ENCODE measurements at regions of chr1 and their contacts with region 1.

Region 1: DNA sequence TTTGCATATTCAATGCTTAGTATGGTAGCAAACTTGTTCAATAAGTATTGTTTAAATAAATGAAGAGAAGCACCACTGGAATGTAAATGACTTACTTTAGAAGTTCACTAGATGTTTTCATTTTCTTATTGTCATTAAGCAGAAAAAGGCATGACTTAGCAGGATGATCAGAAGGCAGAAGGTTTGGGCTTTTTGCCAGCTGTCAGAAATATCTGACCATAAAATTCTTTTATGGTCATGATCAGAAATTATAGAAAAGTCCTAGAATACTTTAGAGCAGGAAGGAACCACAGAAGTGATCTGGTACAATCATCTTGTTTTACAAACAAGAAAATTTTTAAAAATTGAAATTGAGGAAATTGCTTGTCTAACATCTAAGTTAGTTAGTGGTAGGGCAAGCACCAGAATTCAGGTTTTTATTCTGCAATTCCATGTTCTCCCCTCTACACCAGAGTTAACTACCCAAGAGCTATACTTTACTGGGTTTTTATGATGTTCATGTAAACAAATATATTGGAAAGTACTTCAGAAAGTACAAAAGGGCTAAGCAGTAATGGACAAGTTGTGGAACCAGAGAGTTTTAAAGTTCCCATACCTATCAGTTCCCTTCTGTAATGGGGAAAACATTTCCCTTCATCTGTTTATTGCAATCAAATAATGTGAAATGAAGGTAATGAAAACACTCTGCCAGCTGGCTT is 10.1 kb downstream of the FMO5 start:
- DNase-seq: no peak
- ATAC-seq: peak; percentile 48
- H3K4me3 ChIP-seq: no peak overlapping the region
- H3K27ac ChIP-seq: peak overlapping the region; percentile 75
- H3K4me1 ChIP-seq: peaks cover 100% of the 10 kb centered on the region
- H3K27me3 ChIP-seq: no peaks in the 10 kb centered on the region
- CTCF ChIP-seq: no peak
- EP300 ChIP-seq: no peak
- POLR2A ChIP-seq: no peak
- RAD21 ChIP-seq: no peak

Region 2: DNA sequence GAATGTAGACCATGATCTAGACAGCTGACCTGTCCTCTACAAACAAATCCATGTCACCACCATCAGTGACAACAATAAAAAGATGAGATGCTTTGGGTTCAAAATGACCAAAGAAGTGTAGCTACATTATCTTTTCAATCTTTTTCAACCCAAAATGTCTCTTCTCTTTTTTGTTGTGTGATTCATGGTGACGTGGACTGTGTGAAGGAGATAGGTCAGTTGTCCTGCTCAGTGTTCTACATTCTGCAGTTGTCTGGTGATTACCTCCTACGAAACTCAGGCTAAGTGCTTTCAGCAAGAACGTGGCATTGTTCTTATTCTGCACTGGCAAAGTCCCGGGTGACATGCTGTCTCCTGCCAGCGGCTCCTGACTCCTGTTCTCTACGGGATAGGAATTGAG is 115.8 kb before region 1 on chr1:
- CTCF ChIA-PET with region 1: no interaction called
- POLR2A ChIA-PET with region 1: no interaction called
- in situ Hi-C with region 1: no loop called
- intact Hi-C with region 1: no loop called
- DNase-seq: no peak
- ATAC-seq: no peak
- H3K4me3 ChIP-seq: no peak overlapping the region
- H3K27ac ChIP-seq: no peak overlapping the region
- H3K4me1 ChIP-seq: no peaks in the 10 kb centered on the region
- H3K27me3 ChIP-seq: peaks cover 0 to 14% of the 10 kb centered on the region in 2 experiments; a peak in 3 of 5 replicates
- CTCF ChIP-seq: no peak
- EP300 ChIP-seq: no peak
- POLR2A ChIP-seq: no peak
- RAD21 ChIP-seq: no peak

Region 3: GRCh38 chr1:147172168-147172992 is 42.6 kb before region 1 on chr1 and contains the start of gene PRKAB2:
- CTCF ChIA-PET with region 1: interaction called, 3 read pairs
- POLR2A ChIA-PET with region 1: interaction called, 10 read pairs
- in situ Hi-C with region 1: no loop called
- intact Hi-C with region 1: loop called (anchors 2 kb)
- DNase-seq: peak; percentile 91
- ATAC-seq: peak; percentile 93
- H3K4me3 ChIP-seq: peak within 1 kb of the TSS; percentile 85 to 99 (median 99)
- H3K27ac ChIP-seq: peak within 1 kb of the TSS; percentile 89
- H3K4me1 ChIP-seq: peaks cover 40% of the 10 kb centered on the region
- H3K27me3 ChIP-seq: peaks cover 0 to 4% of the 10 kb centered on the region in 2 experiments; a peak in 1 of 5 replicates
- CTCF ChIP-seq: peak; percentile 92
- EP300 ChIP-seq: peak in 1 of 2 experiments; percentile 35; a peak in 1 of 4 replicates
- POLR2A ChIP-seq: peak in 1 of 2 experiments; percentile 59; a peak in 3 of 4 replicates
- RAD21 ChIP-seq: peak; percentile 99
- total RNA-seq, gene PRKAB2: 43.3 and 44.0 TPM in 2 replicates

Region 4: GRCh38 chr1:147189514-147189913 is 25.5 kb before region 1 on chr1:
- CTCF ChIA-PET with region 1: no interaction called
- POLR2A ChIA-PET with region 1: no interaction called
- in situ Hi-C with region 1: no loop called
- intact Hi-C with region 1: no loop called
- DNase-seq: no peak
- ATAC-seq: peak; percentile 44; the same call in 1 of the 3 replicates
- H3K4me3 ChIP-seq: no peak overlapping the region
- H3K27ac ChIP-seq: no peak overlapping the region
- H3K4me1 ChIP-seq: no peaks in the 10 kb centered on the region
- H3K27me3 ChIP-seq: no peaks in the 10 kb centered on the region
- CTCF ChIP-seq: no peak
- EP300 ChIP-seq: no peak
- POLR2A ChIP-seq: peak in 1 of 2 experiments; percentile 29; a peak in 1 of 4 replicates
- RAD21 ChIP-seq: no peak

Region 5: DNA sequence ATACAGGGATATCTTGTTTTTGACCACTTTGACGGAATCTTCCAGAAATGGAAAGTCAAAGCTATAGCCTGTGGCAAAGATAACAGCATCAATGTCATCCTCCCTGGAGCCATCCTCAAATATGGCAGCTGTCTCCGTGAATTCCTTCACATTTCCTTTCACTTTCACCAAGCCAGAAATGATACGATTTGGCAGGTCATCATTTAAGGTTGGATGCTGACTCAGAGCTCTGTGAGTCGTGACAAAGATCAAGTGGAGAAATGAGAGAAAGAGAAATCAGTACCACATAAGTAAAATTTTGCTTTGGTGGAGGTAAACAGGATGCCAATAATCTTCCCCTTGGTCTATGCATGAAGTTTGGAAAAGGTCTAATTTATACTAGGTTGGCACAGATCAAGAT is 13.7 kb before region 1 on chr1:
- CTCF ChIA-PET with region 1: no interaction called
- POLR2A ChIA-PET with region 1: interaction called, 16 read pairs
- in situ Hi-C with region 1: no loop called
- intact Hi-C with region 1: no loop called
- DNase-seq: no peak
- ATAC-seq: peak; percentile 13; the same call in 1 of the 3 replicates
- H3K4me3 ChIP-seq: no peak overlapping the region
- H3K27ac ChIP-seq: no peak overlapping the region
- H3K4me1 ChIP-seq: no peaks in the 10 kb centered on the region
- H3K27me3 ChIP-seq: no peaks in the 10 kb centered on the region
- CTCF ChIP-seq: no peak
- EP300 ChIP-seq: no peak
- POLR2A ChIP-seq: peak in 1 of 2 experiments; percentile 20; a peak in 1 of 4 replicates
- RAD21 ChIP-seq: no peak

Region 6: DNA sequence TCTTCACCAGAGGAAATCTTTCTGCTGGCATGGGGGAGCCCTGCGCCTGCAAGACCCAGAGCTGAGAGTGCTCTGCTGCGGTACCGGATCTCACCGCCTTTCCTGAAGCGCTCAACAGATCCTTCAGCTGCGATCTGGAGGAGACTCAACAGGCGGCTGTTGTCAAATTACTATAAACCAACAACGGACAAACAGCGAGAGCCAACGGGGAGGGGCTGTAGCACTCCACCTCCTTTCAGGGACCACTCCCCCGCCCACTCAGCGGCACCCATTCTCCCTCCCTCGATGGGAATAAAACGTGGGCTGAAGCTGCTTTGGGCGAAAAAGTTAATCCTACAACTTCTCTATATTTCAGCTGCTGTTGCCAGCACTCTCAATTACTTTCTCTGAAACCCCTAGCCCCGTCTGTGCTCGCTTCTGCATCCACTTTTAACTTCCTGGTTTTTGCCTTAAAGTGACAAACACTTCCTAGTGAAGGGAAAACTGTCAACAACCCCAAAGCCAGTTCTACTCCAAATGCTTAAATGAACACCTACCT is 10.3 kb after region 1 on chr1 and contains the start of gene FMO5:
- CTCF ChIA-PET with region 1: no interaction called
- POLR2A ChIA-PET with region 1: interaction called, 14 read pairs
- in situ Hi-C with region 1: no loop called
- intact Hi-C with region 1: no loop called
- DNase-seq: no peak
- ATAC-seq: peak; percentile 93
- H3K4me3 ChIP-seq: peak within 1 kb of the TSS; percentile 62 to 80 (median 69)
- H3K27ac ChIP-seq: peak within 1 kb of the TSS; percentile 74
- H3K4me1 ChIP-seq: peaks cover 59% of the 10 kb centered on the region
- H3K27me3 ChIP-seq: no peaks in the 10 kb centered on the region; a peak in 1 of 5 replicates
- CTCF ChIP-seq: peak; percentile 9; the same call in 1 of the 2 replicates
- EP300 ChIP-seq: no peak
- POLR2A ChIP-seq: peak in 1 of 2 experiments; percentile 90; a peak in 2 of 4 replicates
- RAD21 ChIP-seq: no peak
- total RNA-seq, gene FMO5: 48.2 and 59.5 TPM in 2 replicates

Region 7: GRCh38 chr1:147236959-147237826 is 22.2 kb after region 1 on chr1:
- CTCF ChIA-PET with region 1: interaction called, 8 read pairs
- POLR2A ChIA-PET with region 1: interaction called, 101 read pairs
- in situ Hi-C with region 1: no loop called
- intact Hi-C with region 1: loop called (anchors 1 kb)
- DNase-seq: no peak
- ATAC-seq: peak; percentile 17; the same call in 2 of the 3 replicates
- H3K4me3 ChIP-seq: no peak overlapping the region; a peak in 2 of 6 replicates
- H3K27ac ChIP-seq: peak overlapping the region; percentile 93
- H3K4me1 ChIP-seq: peaks cover 87% of the 10 kb centered on the region
- H3K27me3 ChIP-seq: no peaks in the 10 kb centered on the region
- CTCF ChIP-seq: peak; percentile 33; the same call in 1 of the 2 replicates
- EP300 ChIP-seq: no peak
- POLR2A ChIP-seq: no peak
- RAD21 ChIP-seq: no peak

Region 8: DNA sequence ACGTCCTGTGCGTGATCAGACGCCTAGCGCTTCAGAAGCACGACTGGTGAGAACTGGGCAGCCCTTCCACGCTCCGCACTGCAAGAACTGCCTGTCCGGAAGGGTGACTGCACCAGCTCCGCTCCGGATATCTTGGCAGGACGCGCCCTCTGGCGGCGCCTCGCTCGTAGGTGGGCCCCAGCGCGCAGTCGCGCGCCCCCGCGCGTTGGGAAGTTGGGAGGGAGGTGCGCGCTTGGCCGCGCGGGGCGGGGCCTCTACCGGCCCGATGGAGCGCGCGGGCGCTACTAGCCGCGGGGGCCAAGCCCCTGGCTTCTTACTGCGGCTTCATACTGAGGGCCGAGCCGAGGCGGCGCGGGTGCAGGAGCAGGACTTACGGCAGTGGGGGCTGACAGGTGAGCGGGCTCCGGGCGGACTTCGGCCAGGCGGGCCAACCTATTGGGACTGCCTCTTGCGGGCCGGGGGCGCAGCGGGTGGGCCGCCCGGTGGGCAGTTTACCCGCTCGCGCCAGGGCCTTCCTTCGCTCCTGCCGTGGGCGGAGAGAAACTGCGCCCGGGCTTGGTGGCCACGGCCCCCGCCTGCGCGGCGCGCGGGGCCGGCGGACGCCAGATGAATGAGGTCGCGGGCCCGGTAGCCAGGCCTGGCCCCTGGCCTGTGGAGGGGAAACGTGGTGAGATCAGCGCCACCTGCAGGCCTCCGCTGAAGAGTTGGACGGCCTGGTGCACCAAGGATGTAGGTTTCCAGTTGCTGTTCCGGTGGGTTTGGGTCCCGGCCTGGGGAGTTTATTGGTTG is 27.6 kb after region 1 on chr1 and contains the start of gene CHD1L:
- CTCF ChIA-PET with region 1: interaction called, 8 read pairs
- POLR2A ChIA-PET with region 1: interaction called, 101 read pairs
- in situ Hi-C with region 1: no loop called
- intact Hi-C with region 1: loop called (anchors 1 kb)
- DNase-seq: peak; percentile 88
- ATAC-seq: peak; percentile 88
- H3K4me3 ChIP-seq: peak within 1 kb of the TSS; percentile 77 to 97 (median 89)
- H3K27ac ChIP-seq: peak within 1 kb of the TSS; percentile 93
- H3K4me1 ChIP-seq: peaks cover 80% of the 10 kb centered on the region
- H3K27me3 ChIP-seq: no peaks in the 10 kb centered on the region; a peak in 1 of 5 replicates
- CTCF ChIP-seq: peak; percentile 96
- EP300 ChIP-seq: 0 out of 4 replicates have a peak, but pooled peaks of 1 of the 2 experiments have one; percentile 33
- POLR2A ChIP-seq: peak; percentile 65 to 76; a peak in 3 of 4 replicates
- RAD21 ChIP-seq: peak; percentile 100
- total RNA-seq, gene CHD1L: 111 and 123 TPM in 2 replicates

Region 9: GRCh38 chr1:147534386-147534785 is 319.4 kb after region 1 on chr1:
- CTCF ChIA-PET with region 1: no interaction called
- POLR2A ChIA-PET with region 1: no interaction called
- in situ Hi-C with region 1: no loop called
- intact Hi-C with region 1: no loop called
- DNase-seq: peak; percentile 26
- ATAC-seq: peak; percentile 49; the same call in 2 of the 3 replicates
- H3K4me3 ChIP-seq: no peak overlapping the region
- H3K27ac ChIP-seq: no peak overlapping the region
- H3K4me1 ChIP-seq: peaks cover 4% of the 10 kb centered on the region; the same call in 1 of the 2 replicates
- H3K27me3 ChIP-seq: no peaks in the 10 kb centered on the region
- CTCF ChIP-seq: no peak
- EP300 ChIP-seq: no peak
- POLR2A ChIP-seq: no peak
- RAD21 ChIP-seq: no peak